ENCODE measurements at regions of chr10 and their contacts with region 1.

Region 1: DNA sequence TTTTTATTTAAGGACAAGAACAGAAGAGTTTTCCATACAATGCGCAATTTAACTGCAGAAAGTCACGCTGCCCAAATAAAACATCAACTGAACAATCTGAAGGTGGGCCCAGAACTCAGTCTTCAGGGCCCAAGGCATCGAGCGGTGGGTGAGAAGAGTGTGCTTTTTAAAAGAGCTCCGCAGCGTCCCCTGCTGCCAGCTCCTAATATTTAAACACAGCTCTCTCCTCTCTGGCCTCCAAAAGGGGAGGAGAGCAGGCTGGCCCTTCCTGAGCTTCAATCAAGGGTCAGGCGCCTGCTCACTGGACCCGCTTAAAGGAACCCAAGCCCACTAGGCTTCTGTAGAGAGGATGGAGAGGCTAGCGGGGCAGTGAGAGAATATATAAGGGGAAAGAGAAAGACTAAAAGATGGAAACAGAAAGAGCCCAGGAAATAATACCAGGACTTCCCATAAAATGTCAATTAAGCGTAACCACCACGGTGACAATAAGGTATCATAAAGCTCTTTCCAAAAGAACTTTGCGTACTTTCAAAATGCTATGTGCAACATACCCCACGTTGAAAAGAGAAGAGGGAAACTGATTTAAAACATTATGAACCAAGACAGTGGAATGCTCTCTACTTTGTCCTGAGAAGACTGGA is 2.8 kb downstream of the FAM53B start:
- DNase-seq: peak; percentile 85
- H3K4me3 ChIP-seq: peak overlapping the region in 1 of 3 experiments; percentile 17
- H3K27ac ChIP-seq: no peak overlapping the region
- H3K4me1 ChIP-seq: peaks cover 39% of the 10 kb centered on the region
- H3K27me3 ChIP-seq: no peaks in the 10 kb centered on the region
- CTCF ChIP-seq: peak; percentile 77 to 81
- POLR2A ChIP-seq: no peak

Region 2: GRCh38 chr10:124461438-124462347 is 279.7 kb before region 1 on chr10 and contains the start of gene LHPP:
- CTCF ChIA-PET with region 1: interaction called, 6 read pairs
- POLR2A ChIA-PET with region 1: no interaction called
- dilution Hi-C with region 1: no loop called
- intact Hi-C with region 1: loop called (anchors 1 kb)
- DNase-seq: peak; percentile 85
- H3K4me3 ChIP-seq: peak within 1 kb of the TSS; percentile 33 to 88 (median 76)
- H3K27ac ChIP-seq: no peak within 1 kb of the TSS
- H3K4me1 ChIP-seq: no peaks in the 10 kb centered on the region
- H3K27me3 ChIP-seq: peaks cover 2 to 3% of the 10 kb centered on the region in 2 experiments
- CTCF ChIP-seq: peak; percentile 8 to 14
- POLR2A ChIP-seq: peak; percentile 72
- total RNA-seq, gene LHPP: 4.2 and 5.8 TPM in 2 replicates

Region 3: DNA sequence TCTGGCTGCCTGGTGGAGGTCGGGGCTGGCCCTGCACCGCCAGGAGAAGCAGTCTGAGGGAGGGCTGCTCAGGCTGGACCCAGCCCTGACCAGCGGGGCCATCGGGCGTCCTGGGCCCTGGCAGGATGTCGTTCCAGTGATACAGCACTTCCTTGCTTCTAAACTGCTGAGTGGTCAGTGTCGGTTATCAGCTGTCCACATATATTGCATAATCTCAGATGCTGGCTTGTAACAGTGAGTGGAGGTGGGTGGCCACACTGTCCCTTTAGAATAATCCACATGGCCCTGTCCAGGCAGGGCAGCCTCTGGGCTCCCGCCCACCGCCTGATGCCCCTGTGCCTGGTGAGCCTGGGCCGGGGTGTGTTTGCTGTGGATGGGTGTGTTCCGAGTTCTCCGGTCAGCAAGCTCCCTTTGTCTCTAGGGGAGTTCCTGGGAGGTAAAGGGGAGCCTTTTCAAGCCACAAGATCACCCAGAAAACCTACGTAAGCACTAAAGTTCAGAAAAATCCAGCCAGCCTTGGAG is 193.7 kb before region 1 on chr10:
- CTCF ChIA-PET with region 1: interaction called, 226 read pairs
- POLR2A ChIA-PET with region 1: no interaction called
- dilution Hi-C with region 1: no loop called
- intact Hi-C with region 1: no loop called
- DNase-seq: no peak
- H3K4me3 ChIP-seq: no peak overlapping the region
- H3K27ac ChIP-seq: no peak overlapping the region
- H3K4me1 ChIP-seq: no peaks in the 10 kb centered on the region
- H3K27me3 ChIP-seq: no peaks in the 10 kb centered on the region
- CTCF ChIP-seq: no peak
- POLR2A ChIP-seq: no peak

Region 4: GRCh38 chr10:124632064-124632531 is 109.3 kb before region 1 on chr10:
- CTCF ChIA-PET with region 1: interaction called, 105 read pairs
- POLR2A ChIA-PET with region 1: no interaction called
- dilution Hi-C with region 1: no loop called
- intact Hi-C with region 1: loop called (anchors 1 kb)
- DNase-seq: peak; percentile 31
- H3K4me3 ChIP-seq: no peak overlapping the region
- H3K27ac ChIP-seq: no peak overlapping the region
- H3K4me1 ChIP-seq: peaks cover 2% of the 10 kb centered on the region
- H3K27me3 ChIP-seq: no peaks in the 10 kb centered on the region
- CTCF ChIP-seq: peak; percentile 47 to 69
- POLR2A ChIP-seq: no peak

Region 5: GRCh38 chr10:124701435-124701834 is 40.0 kb before region 1 on chr10:
- CTCF ChIA-PET with region 1: interaction called, 61 read pairs
- POLR2A ChIA-PET with region 1: no interaction called
- dilution Hi-C with region 1: no loop called
- intact Hi-C with region 1: loop called (anchors 1 kb)
- DNase-seq: peak; percentile 96
- H3K4me3 ChIP-seq: no peak overlapping the region
- H3K27ac ChIP-seq: peak overlapping the region; percentile 46
- H3K4me1 ChIP-seq: peaks cover 19% of the 10 kb centered on the region
- H3K27me3 ChIP-seq: no peaks in the 10 kb centered on the region
- CTCF ChIP-seq: no peak
- POLR2A ChIP-seq: no peak

Region 6: GRCh38 chr10:124755581-124755980 is 14.2 kb after region 1 on chr10:
- CTCF ChIA-PET with region 1: interaction called, 18 read pairs
- POLR2A ChIA-PET with region 1: no interaction called
- dilution Hi-C with region 1: no loop called
- intact Hi-C with region 1: no loop called
- DNase-seq: no peak
- H3K4me3 ChIP-seq: no peak overlapping the region
- H3K27ac ChIP-seq: no peak overlapping the region
- H3K4me1 ChIP-seq: peaks cover under 1% of the 10 kb centered on the region
- H3K27me3 ChIP-seq: no peaks in the 10 kb centered on the region
- CTCF ChIP-seq: no peak
- POLR2A ChIP-seq: no peak

Measured in endothelial cell of umbilical vein (primary cell).